ENCODE measurements at regions of chr9 and their contacts with region 1.

Region 1: DNA sequence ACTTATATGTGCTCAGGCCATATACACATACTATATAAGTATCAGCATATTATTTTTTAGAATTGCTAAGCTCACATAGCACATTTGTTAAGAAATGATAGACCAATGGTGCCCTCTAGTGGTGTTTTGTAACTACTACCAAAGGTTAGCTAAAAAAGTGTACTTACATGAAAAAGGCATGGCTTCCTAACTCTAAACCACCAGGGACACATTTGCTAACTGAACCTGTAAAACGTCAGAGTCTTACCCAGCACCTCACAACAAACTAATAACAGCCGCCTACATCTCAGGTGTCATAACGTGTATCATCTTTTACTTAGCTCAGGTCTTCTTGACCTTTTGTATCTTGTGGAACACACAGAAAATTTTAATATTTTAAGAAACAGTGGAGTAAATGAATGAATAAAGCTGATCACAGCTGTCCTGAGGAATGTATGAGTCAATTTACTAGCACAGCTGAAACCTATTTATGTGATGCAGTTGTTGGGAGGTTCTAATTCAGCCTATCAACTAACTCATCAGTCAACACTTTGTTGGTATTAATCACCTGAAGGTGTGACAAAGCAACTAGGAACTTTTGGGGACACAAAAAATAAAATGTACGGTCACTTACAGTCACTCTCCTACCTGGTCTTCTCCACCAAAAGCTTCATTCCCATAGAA is 72.9 kb downstream of the BAAT start:
- DNase-seq: peak; percentile 93
- ATAC-seq: peak; percentile 47
- H3K4me3 ChIP-seq: no peak overlapping the region
- H3K27ac ChIP-seq: peak overlapping the region; percentile 27
- H3K4me1 ChIP-seq: peaks cover 55% of the 10 kb centered on the region
- H3K27me3 ChIP-seq: no peaks in the 10 kb centered on the region
- CTCF ChIP-seq: peak; percentile 87
- EP300 ChIP-seq: no peak
- POLR2A ChIP-seq: no peak
- RAD21 ChIP-seq: peak; percentile 94

Region 2: GRCh38 chr9:100700689-100701318 is 611.1 kb before region 1 on chr9:
- CTCF ChIA-PET with region 1: interaction called, 3 read pairs
- POLR2A ChIA-PET with region 1: no interaction called
- in situ Hi-C with region 1: no loop called
- intact Hi-C with region 1: loop called (anchors 1 kb)
- DNase-seq: peak; percentile 27
- ATAC-seq: peak; percentile 75
- H3K4me3 ChIP-seq: no peak overlapping the region
- H3K27ac ChIP-seq: no peak overlapping the region
- H3K4me1 ChIP-seq: peaks cover 11% of the 10 kb centered on the region; the same call in 1 of the 2 replicates
- H3K27me3 ChIP-seq: no peaks in the 10 kb centered on the region
- CTCF ChIP-seq: peak; percentile 57
- EP300 ChIP-seq: no peak
- POLR2A ChIP-seq: no peak
- RAD21 ChIP-seq: no peak

Region 3: GRCh38 chr9:100911273-100911672 is 400.6 kb before region 1 on chr9:
- CTCF ChIA-PET with region 1: no interaction called
- POLR2A ChIA-PET with region 1: no interaction called
- in situ Hi-C with region 1: no loop called
- intact Hi-C with region 1: no loop called
- DNase-seq: no peak
- ATAC-seq: no peak
- H3K4me3 ChIP-seq: no peak overlapping the region
- H3K27ac ChIP-seq: no peak overlapping the region
- H3K4me1 ChIP-seq: no peaks in the 10 kb centered on the region
- H3K27me3 ChIP-seq: peaks cover 0 to 8% of the 10 kb centered on the region in 2 experiments; a peak in 1 of 5 replicates
- CTCF ChIP-seq: no peak
- EP300 ChIP-seq: no peak
- POLR2A ChIP-seq: no peak
- RAD21 ChIP-seq: no peak

Region 4: GRCh38 chr9:101119206-101119819 is 192.6 kb before region 1 on chr9:
- CTCF ChIA-PET with region 1: interaction called, 40 read pairs
- POLR2A ChIA-PET with region 1: interaction called, 3 read pairs
- in situ Hi-C with region 1: loop called (anchors 5 kb)
- intact Hi-C with region 1: loop called (anchors 1 kb)
- DNase-seq: peak; percentile 57
- ATAC-seq: peak; percentile 100
- H3K4me3 ChIP-seq: no peak overlapping the region
- H3K27ac ChIP-seq: no peak overlapping the region
- H3K4me1 ChIP-seq: peaks cover 6% of the 10 kb centered on the region; the same call in 1 of the 2 replicates
- H3K27me3 ChIP-seq: no peaks in the 10 kb centered on the region
- CTCF ChIP-seq: peak; percentile 99
- EP300 ChIP-seq: no peak
- POLR2A ChIP-seq: no peak
- RAD21 ChIP-seq: peak; percentile 95

Region 5: GRCh38 chr9:101354143-101354764 is 42.4 kb after region 1 on chr9:
- CTCF ChIA-PET with region 1: no interaction called
- POLR2A ChIA-PET with region 1: interaction called, 19 read pairs
- in situ Hi-C with region 1: no loop called
- intact Hi-C with region 1: loop called (anchors 1 kb)
- DNase-seq: peak; percentile 100
- ATAC-seq: peak; percentile 92
- H3K4me3 ChIP-seq: peak overlapping the region in 1 of 3 experiments; percentile 17; a peak in 1 of 6 replicates
- H3K27ac ChIP-seq: peak overlapping the region; percentile 94
- H3K4me1 ChIP-seq: peaks cover 95% of the 10 kb centered on the region
- H3K27me3 ChIP-seq: no peaks in the 10 kb centered on the region
- CTCF ChIP-seq: no peak
- EP300 ChIP-seq: peak; percentile 81 to 97
- POLR2A ChIP-seq: no peak
- RAD21 ChIP-seq: no peak; the same call in 1 of the 2 replicates

Region 6: GRCh38 chr9:101443364-101443771 is 131.5 kb after region 1 on chr9:
- CTCF ChIA-PET with region 1: no interaction called
- POLR2A ChIA-PET with region 1: interaction called, 3 read pairs
- in situ Hi-C with region 1: loop called (anchors 5 kb)
- intact Hi-C with region 1: no loop called
- DNase-seq: no peak
- ATAC-seq: no peak
- H3K4me3 ChIP-seq: no peak overlapping the region
- H3K27ac ChIP-seq: no peak overlapping the region
- H3K4me1 ChIP-seq: peaks cover 86% of the 10 kb centered on the region
- H3K27me3 ChIP-seq: no peaks in the 10 kb centered on the region
- CTCF ChIP-seq: no peak
- EP300 ChIP-seq: no peak
- POLR2A ChIP-seq: no peak
- RAD21 ChIP-seq: no peak

Measured in HepG2 (cell line).